Activated CD8-positive, alpha-beta T cell treated with anti-CD3 and anti-CD28 coated beads, Interleukin-2, amount 10 ng/mL, durations not matched to agents 7 days and 5 days (primary cell): ENCODE measurements at regions of chr7 and their contacts with region 1.

Region 1: GRCh38 chr7:100691676-100692577 is 2.1 kb downstream of the GIGYF1 start:
- DNase-seq: peak; percentile 88
- ATAC-seq: peak; percentile 78
- H3K4me3 Mint-ChIP-seq: peak overlapping the region; percentile 94
- H3K27ac Mint-ChIP-seq: peak overlapping the region; percentile 65
- H3K4me1 Mint-ChIP-seq: peaks cover 37% of the 10 kb centered on the region
- H3K27me3 Mint-ChIP-seq: peaks cover 9% of the 10 kb centered on the region

Region 2: GRCh38 chr7:100604028-100604975 is 87.6 kb before region 1 on chr7:
- CTCF ChIA-PET with region 1: interaction called, 13 read pairs
- POLR2A ChIA-PET with region 1: interaction called, 3 read pairs
- DNase-seq: peak; percentile 90
- ATAC-seq: peak; percentile 79
- H3K4me3 Mint-ChIP-seq: peak overlapping the region; percentile 89
- H3K27ac Mint-ChIP-seq: peak overlapping the region; percentile 97
- H3K4me1 Mint-ChIP-seq: peaks cover 50% of the 10 kb centered on the region
- H3K27me3 Mint-ChIP-seq: peaks cover 6% of the 10 kb centered on the region

Region 3: GRCh38 chr7:100626530-100627237 is 65.2 kb before region 1 on chr7:
- CTCF ChIA-PET with region 1: interaction called, 12 read pairs
- POLR2A ChIA-PET with region 1: no interaction called
- DNase-seq: peak; percentile 95
- ATAC-seq: peak; percentile 96
- H3K4me3 Mint-ChIP-seq: peak overlapping the region; percentile 79
- H3K27ac Mint-ChIP-seq: peak overlapping the region; percentile 90
- H3K4me1 Mint-ChIP-seq: peaks cover 68% of the 10 kb centered on the region
- H3K27me3 Mint-ChIP-seq: no peaks in the 10 kb centered on the region

Region 4: GRCh38 chr7:100673300-100673941 is 18.5 kb before region 1 on chr7 and contains the start of gene GNB2:
- CTCF ChIA-PET with region 1: interaction called, 24 read pairs
- POLR2A ChIA-PET with region 1: interaction called, 4 read pairs
- DNase-seq: peak; percentile 99
- ATAC-seq: peak; percentile 69
- H3K4me3 Mint-ChIP-seq: peak within 1 kb of the TSS; percentile 96
- H3K27ac Mint-ChIP-seq: peak within 1 kb of the TSS; percentile 96
- H3K4me1 Mint-ChIP-seq: peaks cover 26% of the 10 kb centered on the region
- H3K27me3 Mint-ChIP-seq: peaks cover 10% of the 10 kb centered on the region
- total RNA-seq, gene GNB2: 274 to 286 TPM

Region 5: DNA sequence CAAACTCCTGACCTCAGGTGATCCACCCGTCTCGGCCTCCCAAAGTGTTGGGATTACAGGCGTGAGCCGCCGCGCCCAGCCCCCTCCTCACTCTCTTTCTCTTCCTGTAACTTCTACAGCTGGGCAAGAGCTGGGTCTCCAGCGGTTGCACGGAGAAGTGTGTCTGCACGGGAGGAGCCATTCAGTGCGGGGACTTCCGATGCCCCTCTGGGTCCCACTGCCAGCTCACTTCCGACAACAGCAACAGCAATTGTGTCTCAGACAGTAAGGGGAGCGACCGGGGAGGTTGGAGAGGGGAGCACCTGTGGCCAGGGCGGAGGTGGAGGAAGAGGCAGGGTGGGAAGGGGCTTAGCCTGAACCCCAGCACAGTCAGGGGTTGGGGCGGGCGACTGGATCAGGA is 94.0 kb after region 1 on chr7:
- CTCF ChIA-PET with region 1: no interaction called
- POLR2A ChIA-PET with region 1: no interaction called
- DNase-seq: peak; percentile 23
- ATAC-seq: no peak
- H3K4me3 Mint-ChIP-seq: no peak overlapping the region
- H3K27ac Mint-ChIP-seq: peak overlapping the region; percentile 60
- H3K4me1 Mint-ChIP-seq: peaks cover 2% of the 10 kb centered on the region
- H3K27me3 Mint-ChIP-seq: no peaks in the 10 kb centered on the region

Region 6: GRCh38 chr7:100852048-100852872 is 160.3 kb after region 1 on chr7 and contains the start of gene SLC12A9:
- CTCF ChIA-PET with region 1: interaction called, 21 read pairs
- POLR2A ChIA-PET with region 1: no interaction called
- DNase-seq: peak; percentile 91
- ATAC-seq: peak; percentile 99
- H3K4me3 Mint-ChIP-seq: peak within 1 kb of the TSS; percentile 89
- H3K27ac Mint-ChIP-seq: peak within 1 kb of the TSS; percentile 80
- H3K4me1 Mint-ChIP-seq: peaks cover 23% of the 10 kb centered on the region
- H3K27me3 Mint-ChIP-seq: no peaks in the 10 kb centered on the region
- total RNA-seq, gene SLC12A9: 28.3 to 29.5 TPM